ENCODE measurements at regions of chr15 and their contacts with region 1.

Region 1: GRCh38 chr15:68031404-68031803 is 22.7 kb upstream of the PIAS1 start:
- DNase-seq: no peak
- ATAC-seq: no peak
- H3K4me3 ChIP-seq: no peak overlapping the region
- H3K27ac ChIP-seq: no peak overlapping the region
- H3K4me1 ChIP-seq: peaks cover 8% of the 10 kb centered on the region
- H3K27me3 ChIP-seq: no peaks in the 10 kb centered on the region
- CTCF ChIP-seq: no peak
- EP300 ChIP-seq: no peak
- POLR2A ChIP-seq: no peak
- RAD21 ChIP-seq: no peak

Region 2: DNA sequence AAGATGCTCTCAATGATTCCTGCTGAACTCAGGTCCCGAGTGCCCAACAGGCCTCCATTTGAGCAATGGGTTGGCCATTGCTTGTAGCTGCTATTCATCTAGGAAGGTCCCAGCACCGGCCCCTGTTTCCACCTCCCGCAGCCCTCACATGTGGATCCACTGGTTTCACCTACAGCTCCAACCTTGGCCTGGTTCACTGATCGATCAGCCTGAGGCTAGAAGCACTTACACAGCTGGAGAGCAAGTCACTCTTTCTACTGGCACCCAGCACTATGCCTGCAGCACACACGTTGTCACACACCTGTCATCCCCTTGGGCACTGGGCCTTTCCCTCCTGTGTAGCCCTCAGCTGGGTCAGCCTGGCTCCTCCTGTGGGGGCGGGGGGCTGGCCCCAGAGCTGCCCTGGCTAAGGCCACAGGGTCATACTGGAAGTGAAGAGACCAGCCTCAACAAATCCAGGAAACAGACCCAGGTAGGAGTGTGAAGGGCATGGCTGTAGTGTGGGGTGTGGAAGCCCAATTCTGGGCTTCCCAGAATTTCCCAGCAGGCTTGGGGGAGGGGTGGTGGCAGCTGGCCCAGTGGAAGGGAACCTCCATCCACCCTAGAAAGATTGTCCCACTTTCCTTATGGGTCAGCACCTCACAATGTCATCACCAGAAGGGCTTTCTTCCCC is 1007.6 kb before region 1 on chr15:
- CTCF ChIA-PET with region 1: no interaction called
- POLR2A ChIA-PET with region 1: no interaction called
- RAD21 ChIA-PET with region 1: no interaction called
- SMC1A ChIA-PET with region 1: no interaction called
- in situ Hi-C with region 1: no loop called
- intact Hi-C with region 1: no loop called
- DNase-seq: no peak
- ATAC-seq: no peak
- H3K4me3 ChIP-seq: no peak overlapping the region
- H3K27ac ChIP-seq: no peak overlapping the region
- H3K4me1 ChIP-seq: peaks cover 10% of the 10 kb centered on the region
- H3K27me3 ChIP-seq: no peaks in the 10 kb centered on the region
- CTCF ChIP-seq: no peak
- EP300 ChIP-seq: no peak
- POLR2A ChIP-seq: no peak
- RAD21 ChIP-seq: no peak

Region 3: GRCh38 chr15:67945951-67946700 is 85.3 kb before region 1 on chr15:
- CTCF ChIA-PET with region 1: no interaction called
- POLR2A ChIA-PET with region 1: interaction called, 6 read pairs
- RAD21 ChIA-PET with region 1: no interaction called
- SMC1A ChIA-PET with region 1: interaction called, 3 read pairs
- in situ Hi-C with region 1: no loop called
- intact Hi-C with region 1: loop called (anchors 5 kb)
- DNase-seq: no peak
- ATAC-seq: peak; percentile 69
- H3K4me3 ChIP-seq: peak overlapping the region; percentile 43
- H3K27ac ChIP-seq: peak overlapping the region; percentile 84
- H3K4me1 ChIP-seq: peaks cover 16% of the 10 kb centered on the region
- H3K27me3 ChIP-seq: no peaks in the 10 kb centered on the region
- CTCF ChIP-seq: no peak
- EP300 ChIP-seq: no peak
- POLR2A ChIP-seq: no peak; the same call in 1 of the 2 replicates
- RAD21 ChIP-seq: no peak

Region 4: GRCh38 chr15:67967871-67968431 is 63.5 kb before region 1 on chr15:
- CTCF ChIA-PET with region 1: no interaction called
- POLR2A ChIA-PET with region 1: no interaction called
- RAD21 ChIA-PET with region 1: no interaction called
- SMC1A ChIA-PET with region 1: no interaction called
- in situ Hi-C with region 1: no loop called
- intact Hi-C with region 1: no loop called
- DNase-seq: no peak
- ATAC-seq: peak; percentile 94
- H3K4me3 ChIP-seq: peak overlapping the region; percentile 58
- H3K27ac ChIP-seq: no peak overlapping the region
- H3K4me1 ChIP-seq: peaks cover 14% of the 10 kb centered on the region
- H3K27me3 ChIP-seq: no peaks in the 10 kb centered on the region
- CTCF ChIP-seq: no peak
- EP300 ChIP-seq: no peak
- POLR2A ChIP-seq: no peak
- RAD21 ChIP-seq: no peak

Measured in GM12878 (cell line).